RWPE1 (cell line): ENCODE measurements at regions of chr5 and their contacts with region 1.

Region 1: DNA sequence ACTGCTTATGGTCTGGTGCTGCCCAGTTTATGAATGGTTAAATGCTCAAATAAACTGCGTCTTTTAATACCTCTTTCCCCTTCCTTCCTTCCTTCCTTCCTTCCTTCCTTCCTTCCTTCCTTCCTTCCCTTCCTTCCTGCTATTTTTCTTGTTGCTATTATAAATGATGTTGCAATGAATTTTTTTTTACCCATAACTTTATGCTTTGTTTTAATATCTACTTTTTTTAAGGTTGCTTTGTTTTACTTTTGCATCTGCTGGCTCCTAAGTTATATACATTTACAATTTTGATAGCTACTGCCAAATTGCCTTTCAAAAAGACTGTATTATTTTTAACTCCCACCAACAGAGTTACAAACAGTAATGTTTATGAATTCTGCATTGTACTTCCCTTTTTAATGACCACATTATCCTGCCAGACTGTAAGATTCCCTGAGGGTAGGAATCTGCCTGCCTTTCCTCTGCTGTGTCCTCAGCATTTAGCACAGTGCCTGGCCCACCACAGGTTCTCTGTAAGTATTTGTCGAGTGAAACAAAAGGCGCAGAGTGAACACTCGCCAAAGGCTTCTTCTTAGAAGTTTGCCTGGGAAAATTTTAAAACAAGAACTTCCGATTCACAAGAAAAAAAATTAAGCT is 36.9 kb downstream of the KIF4B start:
- DNase-seq: no peak
- H3K27ac ChIP-seq: no peak overlapping the region
- CTCF ChIP-seq: no peak

Region 2: GRCh38 chr5:154995679-154996078 is 54.8 kb before region 1 on chr5:
- CTCF ChIA-PET with region 1: interaction called, 11 read pairs
- POLR2A ChIA-PET with region 1: no interaction called
- DNase-seq: no peak
- H3K27ac ChIP-seq: no peak overlapping the region
- CTCF ChIP-seq: no peak